ENCODE measurements at regions of chr2 and their contacts with region 1.

Region 1: GRCh38 chr2:88753833-88754584 is 62.5 kb downstream of the RPIA start:
- DNase-seq: peak in 7 of 14 experiments; percentile 17 to 80 (median 49)
- ATAC-seq: peak; percentile 84
- H3K4me3 ChIP-seq: no peak overlapping the region
- H3K4me3 Mint-ChIP-seq: peak overlapping the region; percentile 62
- H3K27ac ChIP-seq: peak overlapping the region; percentile 4 to 22
- H3K27ac Mint-ChIP-seq: peak overlapping the region; percentile 89
- H3K4me1 ChIP-seq: peaks cover 44% of the 10 kb centered on the region
- H3K4me1 Mint-ChIP-seq: peaks cover 64% of the 10 kb centered on the region
- H3K27me3 ChIP-seq: no peaks in the 10 kb centered on the region
- H3K27me3 Mint-ChIP-seq: no peaks in the 10 kb centered on the region
- CTCF ChIP-seq: no peak

Region 2: GRCh38 chr2:88691339-88692183 is 62.4 kb before region 1 on chr2 and contains the start of gene RPIA:
- CTCF ChIA-PET with region 1: interaction called, 5 read pairs
- POLR2A ChIA-PET with region 1: interaction called, 7 read pairs
- intact Hi-C with region 1: loop called in 1 of 2 experiments (anchors 10 kb)
- DNase-seq: peak; percentile 94 to 100 (median 99)
- ATAC-seq: peak; percentile 94
- H3K4me3 ChIP-seq: peak within 1 kb of the TSS; percentile 77
- H3K4me3 Mint-ChIP-seq: peak within 1 kb of the TSS; percentile 97
- H3K27ac ChIP-seq: peak within 1 kb of the TSS; percentile 78 to 84
- H3K27ac Mint-ChIP-seq: peak within 1 kb of the TSS; percentile 97
- H3K4me1 ChIP-seq: peaks cover 22% of the 10 kb centered on the region
- H3K4me1 Mint-ChIP-seq: peaks cover 70% of the 10 kb centered on the region
- H3K27me3 ChIP-seq: no peaks in the 10 kb centered on the region
- H3K27me3 Mint-ChIP-seq: no peaks in the 10 kb centered on the region
- CTCF ChIP-seq: peak; percentile 57
- total RNA-seq, gene RPIA: 21.6 to 24.7 TPM

Region 3: GRCh38 chr2:88765154-88765900 is 11.3 kb after region 1 on chr2:
- CTCF ChIA-PET with region 1: interaction called, 3 read pairs
- POLR2A ChIA-PET with region 1: interaction called, 14 read pairs
- intact Hi-C with region 1: no loop called
- DNase-seq: peak in 10 of 14 experiments; percentile 22 to 70 (median 49)
- ATAC-seq: peak; percentile 67
- H3K4me3 ChIP-seq: peak overlapping the region; percentile 29
- H3K4me3 Mint-ChIP-seq: peak overlapping the region; percentile 89
- H3K27ac ChIP-seq: no peak overlapping the region
- H3K27ac Mint-ChIP-seq: peak overlapping the region; percentile 77
- H3K4me1 ChIP-seq: peaks cover 14% of the 10 kb centered on the region
- H3K4me1 Mint-ChIP-seq: peaks cover 19% of the 10 kb centered on the region
- H3K27me3 ChIP-seq: peaks cover 2 to 16% of the 10 kb centered on the region in 2 experiments
- H3K27me3 Mint-ChIP-seq: peaks cover 28% of the 10 kb centered on the region
- CTCF ChIP-seq: no peak